ENCODE measurements at regions of chr1 and their contacts with region 1.

Region 1: GRCh38 chr1:223123011-223123610 is 19.9 kb downstream of the TLR5 start:
- DNase-seq: no peak
- H3K4me3 ChIP-seq: no peak overlapping the region
- H3K27ac ChIP-seq: no peak overlapping the region
- H3K4me1 ChIP-seq: peaks cover 3 to 8% (median 5%) of the 10 kb centered on the region in 4 experiments; a peak in 5 of 7 replicates
- H3K27me3 ChIP-seq: peaks cover 0 to 2% (median under 1%) of the 10 kb centered on the region in 4 experiments; a peak in 1 of 7 replicates
- CTCF ChIP-seq: no peak
- EP300 ChIP-seq: no peak
- POLR2A ChIP-seq: no peak
- RAD21 ChIP-seq: no peak

Region 2: DNA sequence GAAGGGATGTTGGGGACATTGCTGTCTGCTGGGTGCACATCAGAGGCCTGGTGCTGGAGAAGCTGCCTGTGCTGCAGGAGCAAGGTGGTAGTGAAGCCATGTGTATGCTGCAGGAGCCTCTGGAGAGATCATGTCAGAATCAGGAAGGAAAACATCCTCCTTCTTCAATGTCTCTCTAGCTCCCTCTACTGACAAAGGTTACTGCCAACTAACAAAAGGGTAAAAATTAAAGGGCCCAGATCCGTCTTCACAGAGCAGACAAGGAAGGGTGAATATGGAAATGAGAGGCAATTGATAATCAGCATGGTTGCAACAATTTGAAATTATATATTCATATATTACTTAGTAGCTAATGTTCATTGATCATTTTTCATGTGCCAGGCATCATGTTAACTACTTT is 353.9 kb before region 1 on chr1:
- CTCF ChIA-PET with region 1: interaction called, 10 read pairs
- POLR2A ChIA-PET with region 1: no interaction called
- DNase-seq: no peak
- H3K4me3 ChIP-seq: no peak overlapping the region
- H3K27ac ChIP-seq: no peak overlapping the region
- H3K4me1 ChIP-seq: no peaks in the 10 kb centered on the region
- H3K27me3 ChIP-seq: no peaks in the 10 kb centered on the region
- CTCF ChIP-seq: peak in 1 of 3 experiments; percentile 40; a peak in 1 of 4 replicates
- EP300 ChIP-seq: no peak
- POLR2A ChIP-seq: no peak
- RAD21 ChIP-seq: peak; percentile 35 to 38

Region 3: GRCh38 chr1:222798116-222798515 is 325.0 kb before region 1 on chr1:
- CTCF ChIA-PET with region 1: interaction called, 47 read pairs
- POLR2A ChIA-PET with region 1: no interaction called
- DNase-seq: no peak
- H3K4me3 ChIP-seq: no peak overlapping the region
- H3K27ac ChIP-seq: no peak overlapping the region
- H3K4me1 ChIP-seq: no peaks in the 10 kb centered on the region; a peak in 1 of 7 replicates
- H3K27me3 ChIP-seq: no peaks in the 10 kb centered on the region; a peak in 1 of 7 replicates
- CTCF ChIP-seq: no peak
- EP300 ChIP-seq: no peak
- POLR2A ChIP-seq: no peak
- RAD21 ChIP-seq: no peak

Region 4: DNA sequence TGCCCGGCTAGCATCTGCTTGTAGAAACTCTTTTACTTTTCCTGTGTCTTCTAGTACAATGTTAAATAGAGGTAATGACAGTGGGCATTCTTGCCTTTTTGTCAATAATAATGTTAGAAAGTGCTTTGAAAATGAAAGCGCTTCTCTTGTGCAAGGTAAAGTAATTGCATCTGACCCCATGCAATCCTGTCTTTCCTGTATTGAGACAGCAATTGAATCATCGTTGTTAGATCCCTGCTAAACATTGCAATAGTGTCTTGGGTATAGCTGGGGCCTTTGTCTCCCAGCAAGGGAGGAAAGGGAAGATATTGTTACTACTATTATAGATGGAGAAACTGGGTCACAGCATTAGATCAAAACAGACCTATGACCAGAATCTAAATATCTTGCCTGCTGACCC is 60.9 kb before region 1 on chr1:
- CTCF ChIA-PET with region 1: no interaction called
- POLR2A ChIA-PET with region 1: no interaction called
- DNase-seq: no peak
- H3K4me3 ChIP-seq: no peak overlapping the region
- H3K27ac ChIP-seq: no peak overlapping the region
- H3K4me1 ChIP-seq: no peaks in the 10 kb centered on the region
- H3K27me3 ChIP-seq: no peaks in the 10 kb centered on the region
- CTCF ChIP-seq: no peak
- EP300 ChIP-seq: no peak
- POLR2A ChIP-seq: no peak
- RAD21 ChIP-seq: no peak

Region 5: GRCh38 chr1:223081181-223081994 is 41.7 kb before region 1 on chr1:
- CTCF ChIA-PET with region 1: interaction called, 31 read pairs
- POLR2A ChIA-PET with region 1: no interaction called
- DNase-seq: peak; percentile 89 to 90
- H3K4me3 ChIP-seq: no peak overlapping the region
- H3K27ac ChIP-seq: no peak overlapping the region
- H3K4me1 ChIP-seq: peaks cover 0 to 2% (median under 1%) of the 10 kb centered on the region in 4 experiments; a peak in 1 of 7 replicates
- H3K27me3 ChIP-seq: peaks cover 0 to 5% (median 0%) of the 10 kb centered on the region in 4 experiments; a peak in 1 of 7 replicates
- CTCF ChIP-seq: peak; percentile 88 to 97 (median 89)
- EP300 ChIP-seq: no peak
- POLR2A ChIP-seq: no peak
- RAD21 ChIP-seq: peak; percentile 99

Region 6: GRCh38 chr1:223133824-223134435 is 10.8 kb after region 1 on chr1:
- CTCF ChIA-PET with region 1: interaction called, 60 read pairs
- POLR2A ChIA-PET with region 1: interaction called, 6 read pairs
- DNase-seq: peak; percentile 70 to 93
- H3K4me3 ChIP-seq: peak overlapping the region; percentile 34 to 63 (median 44); a peak in 7 of 8 replicates
- H3K27ac ChIP-seq: peak overlapping the region; percentile 16; the same call in 1 of the 2 replicates
- H3K4me1 ChIP-seq: peaks cover 16 to 25% (median 19%) of the 10 kb centered on the region in 4 experiments
- H3K27me3 ChIP-seq: peaks cover 0 to 7% (median 2%) of the 10 kb centered on the region in 4 experiments; a peak in 6 of 7 replicates
- CTCF ChIP-seq: peak; percentile 88 to 93 (median 88)
- EP300 ChIP-seq: peak in 1 of 2 experiments; percentile 42; a peak in 1 of 3 replicates
- POLR2A ChIP-seq: peak in 1 of 2 experiments; percentile 61; a peak in 2 of 3 replicates
- RAD21 ChIP-seq: peak; percentile 68 to 76

Region 7: DNA sequence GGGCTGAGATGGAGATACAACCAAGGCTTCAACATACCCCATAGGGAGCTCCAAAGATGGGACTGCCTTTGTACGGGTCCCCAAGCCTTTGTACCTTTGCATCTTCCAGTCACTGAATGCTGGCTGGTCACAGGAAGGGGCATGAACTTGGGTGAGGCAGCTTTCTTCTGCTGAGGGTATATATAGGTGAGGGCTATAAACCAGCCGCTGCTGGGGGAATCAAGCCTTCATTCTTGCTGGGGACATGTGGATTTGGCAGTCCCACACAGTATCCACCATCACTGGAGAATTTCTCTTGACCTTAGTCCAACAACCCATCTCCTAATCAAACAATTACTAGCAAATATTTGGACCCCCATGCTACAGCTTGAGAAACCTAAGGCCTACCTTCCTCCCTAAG is 331.8 kb after region 1 on chr1:
- CTCF ChIA-PET with region 1: no interaction called
- POLR2A ChIA-PET with region 1: no interaction called
- DNase-seq: no peak
- H3K4me3 ChIP-seq: no peak overlapping the region
- H3K27ac ChIP-seq: no peak overlapping the region
- H3K4me1 ChIP-seq: no peaks in the 10 kb centered on the region
- H3K27me3 ChIP-seq: no peaks in the 10 kb centered on the region
- CTCF ChIP-seq: no peak
- EP300 ChIP-seq: no peak
- POLR2A ChIP-seq: no peak
- RAD21 ChIP-seq: no peak

Measured in H1 (cell line).